Aorta (tissue), 5 donors: ENCODE measurements at regions of chr11 and their contacts with region 1.

Region 1: DNA sequence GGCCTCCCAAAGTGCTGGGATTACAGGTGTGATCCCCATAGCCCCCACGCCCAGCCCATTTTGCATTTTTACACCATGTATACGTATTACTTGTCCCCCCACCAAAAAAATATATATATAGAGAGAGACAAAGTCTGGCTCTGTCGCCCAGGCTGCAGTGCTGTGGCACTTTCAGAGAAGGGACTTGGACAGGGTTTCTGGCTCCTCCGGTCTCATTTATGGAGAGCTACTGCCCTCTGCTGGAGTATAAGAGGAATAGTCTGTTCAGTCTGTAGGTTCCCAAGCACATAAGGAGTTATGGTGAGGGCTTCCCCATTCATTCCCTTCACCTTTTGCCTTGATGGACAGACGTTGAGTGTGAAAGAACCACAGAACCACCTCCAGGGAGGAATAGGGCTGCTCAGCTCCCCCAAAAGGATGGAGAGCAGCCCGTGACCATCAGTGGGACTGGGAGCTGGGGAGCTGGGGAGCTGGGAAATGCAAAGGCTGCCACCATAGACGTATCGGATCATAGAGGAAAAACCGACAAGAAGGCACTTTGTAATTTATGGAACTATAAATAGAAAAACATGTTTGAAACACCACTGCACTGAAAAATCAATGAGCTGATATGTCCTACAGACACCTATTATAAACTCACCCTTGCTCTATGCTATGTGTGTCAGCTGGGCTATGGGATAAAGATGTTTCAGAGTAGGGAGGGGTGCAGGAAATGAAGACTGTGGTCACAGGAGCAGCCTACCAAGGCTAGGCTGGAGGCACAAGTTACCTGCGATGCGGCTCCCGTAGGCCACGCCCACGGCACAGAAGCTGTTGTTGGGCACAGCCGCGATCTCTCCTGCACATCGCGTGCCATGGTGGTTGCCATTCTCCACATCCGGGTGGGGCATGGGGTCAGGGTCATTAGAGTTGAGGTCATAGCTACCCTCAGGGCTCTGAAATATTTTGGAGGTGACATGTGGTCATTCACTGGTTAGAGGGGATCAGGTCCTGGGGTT is 5.2 kb downstream of the PCSK7 start:
- DNase-seq: peak; percentile 57 to 76
- ATAC-seq: peak; percentile 88
- H3K4me3 ChIP-seq: no peak overlapping the region
- H3K27ac ChIP-seq: no peak overlapping the region
- H3K4me1 ChIP-seq: no peaks in the 10 kb centered on the region
- H3K27me3 ChIP-seq: no peaks in the 10 kb centered on the region

Region 2: DNA sequence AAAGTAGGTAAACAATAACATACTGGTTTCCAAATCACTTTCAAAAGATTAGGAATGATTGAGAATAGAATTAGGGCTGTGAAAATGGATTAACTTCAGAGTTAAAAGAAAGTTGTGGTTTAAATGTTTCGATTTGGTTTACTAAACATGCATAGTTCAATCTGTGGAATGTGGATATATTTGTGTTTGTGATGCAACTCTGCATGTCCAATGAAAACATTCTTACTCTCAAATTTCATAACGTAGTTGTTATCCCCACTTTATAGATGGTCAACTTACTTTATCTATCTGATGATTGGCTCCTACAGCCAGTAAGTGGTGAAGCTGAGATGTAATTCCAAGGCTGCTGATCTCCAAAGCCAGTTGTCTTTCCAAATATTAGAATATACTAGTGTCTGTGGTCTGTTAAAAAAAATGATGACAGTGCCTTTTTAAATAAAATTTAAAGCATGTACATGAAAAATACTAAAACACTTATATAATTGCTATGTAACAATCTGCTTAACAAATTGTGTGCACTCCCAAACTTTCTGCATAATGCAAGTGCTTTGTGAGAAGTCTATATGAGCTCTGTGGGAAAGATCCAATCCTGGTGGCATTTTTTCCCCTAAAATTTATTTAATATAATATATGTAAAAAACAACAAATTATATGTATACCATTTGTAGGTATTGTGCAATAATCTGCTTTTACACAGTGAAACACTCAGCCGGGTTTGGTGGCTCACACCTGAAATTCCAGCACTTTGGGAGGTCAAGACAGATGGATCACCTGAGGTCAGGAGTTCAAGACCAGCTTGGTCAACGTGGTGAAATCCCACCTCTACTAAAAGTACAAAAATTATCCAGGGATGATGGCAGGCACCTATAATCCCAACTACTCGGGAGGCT is 118.7 kb before region 1 on chr11:
- intact Hi-C with region 1: loop called (anchors 2 to 5 kb)
- DNase-seq: no peak
- ATAC-seq: no peak
- H3K4me3 ChIP-seq: no peak overlapping the region
- H3K27ac ChIP-seq: no peak overlapping the region
- H3K4me1 ChIP-seq: no peaks in the 10 kb centered on the region
- H3K27me3 ChIP-seq: no peaks in the 10 kb centered on the region

Region 3: DNA sequence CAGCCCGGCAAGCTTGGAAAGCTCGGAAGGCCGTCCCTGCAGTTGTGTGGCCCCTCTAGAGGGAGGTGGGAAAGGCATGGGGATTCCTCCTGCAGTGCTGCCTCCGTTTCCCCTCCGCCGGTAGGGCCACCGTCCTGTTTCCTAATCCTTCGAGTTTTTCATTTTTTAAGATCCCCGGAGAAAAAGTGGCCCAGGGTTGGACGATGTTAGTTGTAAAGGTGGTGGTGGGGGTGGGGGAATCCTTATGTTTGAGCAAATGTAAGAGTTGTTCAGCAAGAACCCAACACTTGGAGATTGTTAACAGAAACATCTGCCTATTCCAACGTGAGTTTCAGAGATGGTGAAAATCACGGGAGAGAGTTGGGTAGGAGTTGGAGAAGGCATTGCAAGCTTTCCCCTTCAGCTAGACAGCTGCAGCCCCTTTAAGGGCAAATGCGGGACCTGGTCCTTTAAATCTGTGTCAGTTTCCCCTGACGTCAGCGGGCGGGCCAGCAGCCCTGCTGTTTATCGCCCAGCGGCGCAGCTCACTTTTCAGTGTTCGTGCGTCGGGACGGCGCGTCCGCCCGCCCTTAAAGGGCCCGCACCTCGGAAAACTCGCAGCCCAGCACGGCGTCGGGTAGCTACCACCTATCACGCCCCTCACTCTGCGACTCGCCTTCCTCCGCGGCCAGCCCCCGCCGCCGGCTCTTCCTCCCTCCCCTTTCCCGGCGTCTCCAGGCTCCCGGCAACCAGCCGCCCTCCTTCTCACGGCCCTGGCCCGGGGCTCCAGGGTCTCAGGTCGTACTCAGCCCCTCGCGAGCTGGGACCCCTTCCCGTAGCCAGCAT is 48.3 kb before region 1 on chr11 and contains the start of gene SIDT2:
- intact Hi-C with region 1: loop called (anchors 2 to 5 kb)
- DNase-seq: peak; percentile 97 to 98
- ATAC-seq: peak; percentile 97
- H3K4me3 ChIP-seq: peak within 1 kb of the TSS; percentile 74 to 96
- H3K27ac ChIP-seq: peak within 1 kb of the TSS; percentile 50 to 84
- H3K4me1 ChIP-seq: peaks cover 0 to 3% of the 10 kb centered on the region in 2 donors
- H3K27me3 ChIP-seq: no peaks in the 10 kb centered on the region
- total RNA-seq, gene SIDT2: 51.2 to 81.3 TPM

Region 4: DNA sequence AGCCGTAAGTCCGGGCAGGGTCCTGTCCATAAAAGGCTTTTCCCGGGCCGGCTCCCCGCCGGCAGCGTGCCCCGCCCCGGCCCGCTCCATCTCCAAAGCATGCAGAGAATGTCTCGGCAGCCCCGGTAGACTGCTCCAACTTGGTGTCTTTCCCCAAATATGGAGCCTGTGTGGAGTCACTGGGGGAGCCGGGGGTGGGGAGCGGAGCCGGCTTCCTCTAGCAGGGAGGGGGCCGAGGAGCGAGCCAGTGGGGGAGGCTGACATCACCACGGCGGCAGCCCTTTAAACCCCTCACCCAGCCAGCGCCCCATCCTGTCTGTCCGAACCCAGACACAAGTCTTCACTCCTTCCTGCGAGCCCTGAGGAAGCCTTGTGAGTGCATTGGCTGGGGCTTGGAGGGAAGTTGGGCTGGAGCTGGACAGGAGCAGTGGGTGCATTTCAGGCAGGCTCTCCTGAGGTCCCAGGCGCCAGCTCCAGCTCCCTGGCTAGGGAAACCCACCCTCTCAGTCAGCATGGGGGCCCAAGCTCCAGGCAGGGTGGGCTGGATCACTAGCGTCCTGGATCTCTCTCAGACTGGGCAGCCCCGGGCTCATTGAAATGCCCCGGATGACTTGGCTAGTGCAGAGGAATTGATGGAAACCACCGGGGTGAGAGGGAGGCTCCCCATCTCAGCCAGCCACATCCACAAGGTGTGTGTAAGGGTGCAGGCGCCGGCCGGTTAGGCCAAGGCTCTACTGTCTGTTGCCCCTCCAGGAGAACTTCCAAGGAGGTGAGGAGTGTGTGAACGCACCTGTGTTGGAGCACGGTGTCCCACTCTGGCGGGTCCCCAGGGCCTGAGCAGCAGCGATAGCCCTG is 27.4 kb before region 1 on chr11 and contains the start of gene TAGLN:
- intact Hi-C with region 1: loop called in 1 of 2 experiments (anchors 1 kb)
- DNase-seq: peak; percentile 95 to 97
- ATAC-seq: peak; percentile 86
- H3K4me3 ChIP-seq: peak within 1 kb of the TSS; percentile 46 to 98
- H3K27ac ChIP-seq: peak within 1 kb of the TSS; percentile 94 to 99
- H3K4me1 ChIP-seq: no peaks in the 10 kb centered on the region
- H3K27me3 ChIP-seq: no peaks in the 10 kb centered on the region
- total RNA-seq, gene TAGLN: 4,857 to 10,188 TPM

Region 5: DNA sequence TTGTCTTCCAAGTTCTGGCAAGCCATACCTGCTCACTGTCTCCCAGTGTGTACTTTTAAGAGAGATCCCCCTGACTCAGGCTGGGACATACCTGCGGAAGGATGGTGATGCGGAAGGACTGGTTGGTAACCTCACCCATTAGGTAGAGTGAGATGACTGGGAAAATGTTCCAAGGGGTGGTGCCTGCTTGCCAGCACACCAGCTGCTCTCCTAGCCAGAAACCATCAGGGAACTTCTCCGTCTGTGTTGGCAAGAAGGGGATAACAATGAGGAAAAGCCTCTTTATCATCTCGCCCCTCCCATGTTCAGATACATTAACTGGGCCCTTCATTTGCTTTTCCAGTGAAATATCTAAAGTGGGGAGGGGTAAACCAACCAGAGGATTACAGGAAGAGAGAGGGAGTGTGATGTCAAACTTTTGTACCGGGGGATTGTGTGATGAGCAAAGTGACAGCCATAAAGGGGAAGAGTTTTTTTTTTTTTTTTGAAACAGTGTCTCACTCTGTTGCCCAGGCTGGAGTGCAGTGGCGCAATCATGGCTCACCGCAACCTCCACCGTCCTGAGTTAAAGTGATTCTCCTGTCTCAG is 64.2 kb after region 1 on chr11 and contains the start of gene BACE1-AS:
- intact Hi-C with region 1: no loop called
- DNase-seq: no peak
- ATAC-seq: no peak
- H3K4me3 ChIP-seq: no peak within 1 kb of the TSS
- H3K27ac ChIP-seq: no peak within 1 kb of the TSS
- H3K4me1 ChIP-seq: no peaks in the 10 kb centered on the region
- H3K27me3 ChIP-seq: no peaks in the 10 kb centered on the region
- total RNA-seq, gene BACE1-AS: 9.8 to 11.5 TPM